Activated CD4-positive, alpha-beta memory T cell treated with anti-CD3 and anti-CD28 coated beads for 36 hours (primary cell): ENCODE measurements at regions of chr3 and their contacts with region 1.

Region 1: DNA sequence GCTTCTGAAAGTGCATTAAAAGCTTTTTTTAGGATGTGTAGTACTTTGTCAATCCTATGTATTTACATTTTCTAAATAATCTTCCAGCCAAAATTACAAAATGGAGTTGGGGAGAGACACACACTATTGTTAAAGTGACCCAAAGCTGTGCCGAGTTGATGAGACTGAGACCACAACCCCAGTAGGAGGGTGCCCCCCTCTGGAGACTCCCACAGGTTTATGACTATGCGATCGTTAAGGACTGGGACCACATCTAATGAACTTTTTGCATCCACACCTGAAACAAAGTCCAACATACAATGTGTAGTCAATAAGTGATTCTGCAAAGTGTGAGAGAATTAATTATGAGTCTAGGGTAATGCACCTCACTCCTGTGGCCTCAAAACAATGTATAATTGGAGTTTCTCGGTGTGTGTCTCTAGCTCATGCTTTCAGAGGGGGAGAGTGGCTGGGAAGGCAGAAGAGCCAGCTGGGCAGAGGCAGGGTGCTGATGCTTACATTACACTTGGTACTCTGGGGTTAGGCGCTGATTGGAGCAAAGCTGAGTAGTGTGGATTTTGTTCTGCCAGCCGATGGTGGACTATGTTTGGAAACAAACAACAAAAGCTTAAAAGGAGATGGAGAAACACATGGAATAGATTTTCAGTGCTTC is 102.8 kb downstream of the KCNH8 start:
- DNase-seq: no peak
- H3K4me3 Mint-ChIP-seq: no peak overlapping the region
- H3K27ac Mint-ChIP-seq: no peak overlapping the region
- H3K4me1 Mint-ChIP-seq: no peaks in the 10 kb centered on the region
- H3K27me3 Mint-ChIP-seq: no peaks in the 10 kb centered on the region

Region 2: DNA sequence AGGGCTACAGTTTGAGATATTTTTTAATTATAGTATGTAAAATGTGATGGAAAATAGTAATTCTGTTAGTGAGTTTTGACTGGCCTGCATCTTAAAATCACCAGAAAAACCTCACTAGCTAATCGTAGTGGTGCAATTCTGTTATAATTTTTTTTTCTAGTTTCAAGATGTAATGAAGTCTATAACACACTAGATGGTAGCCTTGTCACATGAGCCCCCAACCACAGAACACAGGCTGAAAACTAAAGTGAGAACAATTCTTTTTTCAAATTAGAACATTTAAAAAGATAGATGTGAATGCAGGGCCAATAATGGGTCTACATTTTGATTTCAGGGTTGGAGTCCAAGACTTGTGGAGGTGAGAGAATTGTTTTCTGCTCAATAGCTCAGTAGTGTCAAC is 186.1 kb before region 1 on chr3:
- CTCF ChIA-PET with region 1: no interaction called
- POLR2A ChIA-PET with region 1: no interaction called
- intact Hi-C with region 1: loop called (anchors 10 kb)
- DNase-seq: no peak
- H3K4me3 Mint-ChIP-seq: no peak overlapping the region
- H3K27ac Mint-ChIP-seq: no peak overlapping the region
- H3K4me1 Mint-ChIP-seq: no peaks in the 10 kb centered on the region
- H3K27me3 Mint-ChIP-seq: peaks cover 3% of the 10 kb centered on the region

Region 3: GRCh38 chr3:19190602-19191001 is 60.5 kb before region 1 on chr3:
- CTCF ChIA-PET with region 1: no interaction called
- POLR2A ChIA-PET with region 1: no interaction called
- intact Hi-C with region 1: no loop called
- DNase-seq: no peak
- H3K4me3 Mint-ChIP-seq: no peak overlapping the region
- H3K27ac Mint-ChIP-seq: no peak overlapping the region
- H3K4me1 Mint-ChIP-seq: peaks cover 3% of the 10 kb centered on the region
- H3K27me3 Mint-ChIP-seq: no peaks in the 10 kb centered on the region